Psoas muscle (tissue), 8 donors: ENCODE measurements at regions of chr1 and their contacts with region 1.

Region 1: DNA sequence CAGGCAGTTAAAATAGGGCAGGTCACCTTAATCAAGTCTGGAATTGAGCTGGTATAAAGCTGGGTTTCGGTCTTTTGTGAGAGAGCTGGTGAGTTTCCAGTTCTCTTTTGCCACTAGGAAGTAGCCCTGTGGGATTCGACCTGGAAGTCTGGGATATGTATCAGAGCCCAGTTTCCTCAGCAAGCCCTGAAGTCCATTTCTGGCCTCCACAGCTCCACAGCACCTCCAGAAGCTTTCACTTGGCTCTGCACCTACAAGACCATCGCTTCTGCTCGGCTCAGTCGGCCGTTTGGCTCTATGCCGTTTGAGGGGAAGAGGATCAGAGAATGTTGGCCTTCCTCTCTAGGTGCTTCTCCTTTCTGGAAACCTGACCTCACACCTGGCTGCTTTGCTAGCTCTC is 148.0 kb downstream of the GALNT2 start:
- DNase-seq: peak; percentile 59 to 79
- ATAC-seq: peak; percentile 73 to 87 (median 78)
- H3K4me3 ChIP-seq: peak overlapping the region; percentile 13
- H3K27ac ChIP-seq: peak overlapping the region; percentile 71
- H3K4me1 ChIP-seq: peaks cover 64% of the 10 kb centered on the region
- H3K27me3 ChIP-seq: no peaks in the 10 kb centered on the region
- CTCF ChIP-seq: peak; percentile 69

Region 2: DNA sequence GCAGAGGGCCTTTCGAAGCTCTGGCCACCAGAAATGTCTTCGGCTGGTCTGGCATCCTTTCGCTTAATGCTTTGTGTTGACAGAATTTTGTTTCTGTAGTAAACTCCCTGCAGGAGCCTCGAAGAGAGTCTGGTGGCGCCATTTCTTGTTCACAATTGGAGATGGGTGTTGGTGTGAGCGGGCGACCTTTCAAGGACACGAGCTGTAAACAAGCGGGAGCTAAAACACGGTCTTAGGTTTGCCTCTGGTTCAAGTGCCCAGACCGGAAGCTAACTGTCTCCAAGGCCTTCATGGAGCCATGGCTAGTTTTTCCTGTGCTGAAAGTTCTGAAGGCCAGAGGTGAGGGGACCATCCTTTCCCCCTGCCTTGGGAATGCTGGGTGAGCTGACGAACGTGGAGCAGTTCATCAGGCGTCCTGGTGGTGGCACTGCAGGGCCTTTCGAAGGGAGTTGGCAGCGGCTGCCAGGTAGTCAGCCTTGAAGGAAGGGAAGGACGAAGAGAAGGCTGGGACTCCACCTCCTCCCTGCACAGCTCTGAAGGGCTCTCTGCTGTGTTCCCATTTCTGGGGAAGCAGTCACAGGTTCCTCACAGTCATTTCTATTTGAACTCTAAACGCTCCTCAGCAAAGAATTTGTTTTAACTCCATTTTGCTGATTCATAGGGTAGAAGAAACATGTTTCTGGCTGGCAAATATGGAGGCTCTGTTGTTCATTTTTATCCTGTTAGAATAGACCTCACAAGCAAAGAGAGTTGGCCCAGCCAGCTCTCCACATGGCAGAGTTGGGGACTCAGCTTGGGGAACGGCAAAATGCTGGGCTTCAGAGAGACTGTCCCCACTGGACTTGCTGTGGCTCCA is 553.8 kb before region 1 on chr1:
- intact Hi-C with region 1: loop called in 1 of 2 experiments (anchors 5 kb)
- DNase-seq: peak; percentile 79 to 86
- ATAC-seq: peak; percentile 88 to 96 (median 94)
- H3K4me3 ChIP-seq: no peak overlapping the region
- H3K27ac ChIP-seq: no peak overlapping the region
- H3K4me1 ChIP-seq: no peaks in the 10 kb centered on the region
- H3K27me3 ChIP-seq: no peaks in the 10 kb centered on the region
- CTCF ChIP-seq: peak; percentile 87

Region 3: DNA sequence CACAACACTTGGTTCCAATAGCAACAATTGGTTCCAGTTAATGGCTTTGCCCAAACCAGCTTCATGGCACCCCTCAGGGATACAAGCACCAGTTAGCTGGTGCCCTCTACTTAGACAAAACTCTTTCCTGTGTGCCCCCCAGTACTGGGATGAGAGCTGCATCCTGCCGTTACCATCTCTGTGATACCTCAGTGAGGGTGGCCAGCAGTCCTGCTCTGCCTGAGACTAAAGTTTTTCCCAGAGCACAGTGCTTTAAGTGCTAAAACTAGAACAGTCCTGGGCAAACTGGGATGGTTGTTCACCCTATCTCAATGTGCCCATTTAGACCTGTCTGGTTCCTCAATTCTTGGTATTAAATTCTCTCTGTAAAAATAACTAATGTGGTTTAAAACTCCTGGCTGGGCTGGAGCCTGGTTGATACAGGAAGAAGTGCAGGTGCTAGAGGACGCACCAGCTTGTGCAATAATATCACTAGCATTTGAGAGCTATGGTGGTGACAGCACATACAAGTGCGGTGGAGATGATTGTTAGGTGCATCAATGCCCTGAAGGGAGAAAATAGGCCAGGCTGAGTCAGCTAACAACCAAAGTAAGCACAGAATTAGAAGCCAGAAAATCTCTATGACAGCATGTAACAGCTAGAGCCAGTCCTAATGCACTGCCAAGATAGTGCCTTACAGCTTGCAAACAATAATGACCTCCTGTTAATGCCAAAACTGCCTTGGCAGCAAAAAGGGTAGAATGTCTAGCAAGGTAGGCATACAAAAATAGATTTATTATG is 327.8 kb before region 1 on chr1:
- intact Hi-C with region 1: loop called in 1 of 2 experiments (anchors 10 kb)
- DNase-seq: no peak
- ATAC-seq: peak; percentile 86 to 88 (median 86)
- H3K4me3 ChIP-seq: no peak overlapping the region
- H3K27ac ChIP-seq: peak overlapping the region; percentile 98
- H3K4me1 ChIP-seq: peaks cover 36% of the 10 kb centered on the region
- H3K27me3 ChIP-seq: no peaks in the 10 kb centered on the region
- CTCF ChIP-seq: no peak

Region 4: DNA sequence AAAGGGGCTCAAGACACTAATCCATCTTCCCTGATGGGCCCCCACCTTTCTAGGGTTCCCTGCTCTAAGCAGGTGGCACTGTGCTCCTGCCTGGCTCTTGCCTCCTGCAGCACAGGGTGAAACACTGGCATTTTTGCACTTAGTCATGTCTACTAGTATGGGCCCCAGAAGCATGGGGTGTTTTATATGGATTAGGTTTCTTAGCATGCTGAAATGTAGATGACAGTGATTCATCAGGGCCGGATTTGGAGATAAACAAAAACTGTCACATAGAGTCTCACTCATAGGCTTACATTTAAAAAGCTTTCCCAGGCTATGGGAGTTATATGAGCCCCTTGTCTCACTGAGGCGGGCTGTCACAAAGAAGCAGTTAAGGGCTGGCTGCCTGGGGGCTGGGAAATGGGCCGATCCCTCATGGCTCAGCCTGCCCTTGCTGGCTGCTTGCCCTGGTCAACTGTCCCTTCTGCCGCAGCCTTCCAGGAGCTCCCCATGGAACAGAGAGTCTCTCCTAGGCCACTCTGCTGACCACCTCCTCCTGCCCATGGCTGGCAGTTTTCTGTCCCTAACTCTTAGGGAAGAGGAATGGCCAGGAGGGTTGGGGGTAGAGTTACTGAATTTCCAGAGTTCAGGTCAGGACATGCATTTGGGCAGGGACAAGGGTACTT is 141.5 kb before region 1 on chr1:
- intact Hi-C with region 1: loop called (anchors 5 kb)
- DNase-seq: peak; percentile 58 to 89
- ATAC-seq: peak; percentile 84 to 90 (median 87)
- H3K4me3 ChIP-seq: peak overlapping the region; percentile 43
- H3K27ac ChIP-seq: peak overlapping the region; percentile 91
- H3K4me1 ChIP-seq: peaks cover 75% of the 10 kb centered on the region
- H3K27me3 ChIP-seq: no peaks in the 10 kb centered on the region
- CTCF ChIP-seq: no peak

Region 5: DNA sequence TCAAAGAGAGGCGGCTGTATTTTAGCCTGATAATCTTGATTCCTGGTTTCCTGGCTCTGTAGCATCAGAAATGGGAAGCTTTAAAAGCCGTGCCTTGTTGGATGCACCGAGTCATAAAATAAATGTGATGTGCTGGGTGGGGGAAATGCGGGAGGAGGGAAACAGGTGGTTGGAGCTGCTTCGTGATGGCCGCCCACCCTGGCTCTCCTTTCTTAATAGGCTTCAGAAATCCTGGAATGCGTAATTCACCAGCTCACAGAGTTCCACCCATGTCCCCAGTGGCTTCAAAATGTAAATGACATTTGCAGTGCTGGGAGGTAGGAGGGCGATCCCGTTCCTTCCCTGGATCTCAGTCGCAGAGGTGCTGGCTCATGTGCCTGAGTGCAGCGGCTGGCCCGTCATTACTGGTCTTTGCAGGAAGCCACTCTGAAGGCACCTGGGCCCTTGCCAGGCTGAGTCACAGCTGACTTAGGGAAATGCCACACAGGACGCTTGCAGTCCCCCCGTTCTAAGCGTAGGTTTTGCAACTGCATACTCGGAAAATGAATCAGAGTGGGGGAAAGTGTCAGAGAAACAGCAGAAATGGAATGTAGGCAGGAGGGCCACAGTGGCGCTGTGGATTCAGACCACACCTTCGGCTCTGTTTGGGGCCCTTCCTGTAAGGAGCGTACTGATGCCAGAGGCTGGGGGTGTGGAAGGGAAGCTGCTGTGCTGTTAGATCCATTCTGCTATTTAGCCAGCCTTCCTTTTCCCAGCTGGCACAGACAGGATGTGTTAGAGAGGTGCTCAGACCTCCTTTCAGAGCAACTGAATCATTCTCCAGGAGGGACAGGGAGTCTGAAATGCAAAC is 110.4 kb before region 1 on chr1:
- intact Hi-C with region 1: loop called in 1 of 2 experiments (anchors 10 kb)
- DNase-seq: peak; percentile 99
- ATAC-seq: peak; percentile 85 to 95 (median 92)
- H3K4me3 ChIP-seq: peak overlapping the region; percentile 23
- H3K27ac ChIP-seq: peak overlapping the region; percentile 85
- H3K4me1 ChIP-seq: peaks cover 64% of the 10 kb centered on the region
- H3K27me3 ChIP-seq: no peaks in the 10 kb centered on the region
- CTCF ChIP-seq: no peak